ENCODE measurements at regions of chr11 and their contacts with region 1.

Region 1: GRCh38 chr11:1419811-1420210 is 30.1 kb downstream of the BRSK2 start:
- H3K4me3 ChIP-seq: no peak overlapping the region
- H3K27ac ChIP-seq: no peak overlapping the region
- H3K4me1 ChIP-seq: no peaks in the 10 kb centered on the region
- CTCF ChIP-seq: no peak

Region 2: DNA sequence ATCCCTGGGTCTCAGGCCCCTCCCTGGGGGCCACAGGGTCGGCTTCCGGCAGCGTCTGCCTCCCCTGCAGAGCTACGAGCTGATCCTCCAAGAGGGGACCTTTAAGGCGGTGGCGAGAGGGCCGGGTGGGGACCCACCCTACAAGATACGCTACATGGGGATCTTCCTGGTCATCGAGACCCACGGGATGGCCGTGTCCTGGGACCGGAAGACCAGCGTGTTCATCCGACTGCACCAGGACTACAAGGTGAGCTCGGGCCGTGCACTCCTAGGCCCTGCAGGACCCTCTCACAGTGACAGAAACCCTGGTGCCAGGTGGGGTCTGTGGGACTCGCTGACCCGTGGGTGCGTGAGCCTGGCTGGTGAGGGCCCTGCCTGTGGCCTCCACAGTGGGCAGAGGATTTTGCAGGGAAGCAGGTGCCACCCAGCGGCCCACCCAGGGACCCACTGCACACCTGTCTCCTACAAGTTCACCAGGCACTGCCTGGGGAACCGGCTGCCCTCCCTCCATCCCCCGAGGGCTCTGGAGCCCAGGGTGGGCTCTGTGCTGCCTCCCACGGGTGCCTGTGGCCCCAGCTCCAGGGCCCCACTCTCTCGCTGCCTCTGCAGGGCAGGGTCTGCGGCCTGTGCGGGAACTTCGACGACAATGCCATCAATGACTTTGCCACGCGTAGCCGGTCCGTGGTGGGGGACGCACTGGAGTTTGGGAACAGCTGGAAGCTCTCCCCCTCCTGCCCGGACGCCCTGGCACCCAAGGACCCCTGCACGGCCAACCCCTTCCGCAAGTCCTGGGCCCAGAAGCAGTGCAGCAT is 183.3 kb before region 1 on chr11:
- CTCF ChIA-PET with region 1: no interaction called
- POLR2A ChIA-PET with region 1: interaction called, 15 read pairs
- H3K4me3 ChIP-seq: no peak overlapping the region
- H3K27ac ChIP-seq: no peak overlapping the region
- H3K4me1 ChIP-seq: no peaks in the 10 kb centered on the region
- CTCF ChIP-seq: no peak

Region 3: GRCh38 chr11:1409108-1409851 is 10.5 kb before region 1 on chr11:
- CTCF ChIA-PET with region 1: no interaction called
- POLR2A ChIA-PET with region 1: no interaction called
- H3K4me3 ChIP-seq: no peak overlapping the region
- H3K27ac ChIP-seq: no peak overlapping the region
- H3K4me1 ChIP-seq: no peaks in the 10 kb centered on the region
- CTCF ChIP-seq: no peak